Endothelial cell of umbilical vein (primary cell): ENCODE measurements at regions of chr17 and their contacts with region 1.

Region 1: DNA sequence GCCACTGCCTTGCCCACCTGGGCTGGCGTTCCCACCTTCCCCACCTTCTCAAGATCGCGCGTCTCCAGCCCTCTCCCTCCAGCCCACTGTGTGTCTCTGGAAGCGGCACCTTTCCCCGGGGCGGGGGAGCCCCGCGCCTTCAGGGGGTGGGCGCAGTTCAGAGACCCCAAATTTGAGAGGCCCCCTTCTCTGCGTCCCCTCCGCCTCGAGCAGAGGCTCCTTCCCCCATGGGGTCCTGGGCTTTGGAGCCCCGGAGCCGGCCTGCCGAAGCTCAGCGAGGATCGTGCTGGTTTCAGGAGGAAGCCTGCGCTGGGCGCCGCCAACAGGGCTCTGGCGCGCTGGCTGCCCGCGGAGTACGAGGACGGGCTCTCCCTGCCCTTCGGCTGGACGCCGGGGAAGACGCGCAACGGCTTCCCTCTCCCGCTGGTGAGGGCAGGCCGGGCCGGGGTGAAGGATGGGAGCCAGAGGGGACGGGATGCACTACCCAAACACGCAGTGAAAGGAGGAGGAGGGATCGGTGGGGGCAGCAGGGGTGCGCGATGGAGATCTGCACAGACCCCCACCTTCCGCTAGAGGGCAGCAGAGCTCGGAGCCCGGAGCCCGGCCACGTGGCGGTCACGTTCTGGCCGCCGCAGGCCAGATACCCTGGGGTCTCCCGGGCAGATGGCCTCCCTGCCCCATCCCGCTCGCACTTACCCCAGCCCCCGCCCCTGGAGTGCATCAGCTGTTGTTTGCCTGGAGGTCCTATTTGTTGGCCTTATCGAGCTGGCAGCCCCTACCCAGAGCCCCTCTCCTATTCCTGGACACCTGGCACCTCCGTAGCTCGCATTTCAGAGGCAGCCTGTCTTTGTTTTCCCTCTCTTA is 11.1 kb downstream of the LPO start:
- DNase-seq: peak; percentile 55
- H3K4me3 ChIP-seq: peak overlapping the region in 2 of 3 experiments; percentile 31 to 46
- H3K27ac ChIP-seq: no peak overlapping the region
- H3K4me1 ChIP-seq: no peaks in the 10 kb centered on the region
- H3K27me3 ChIP-seq: peaks cover 24% of the 10 kb centered on the region in 2 experiments
- CTCF ChIP-seq: peak; percentile 92 to 99
- POLR2A ChIP-seq: no peak

Region 2: DNA sequence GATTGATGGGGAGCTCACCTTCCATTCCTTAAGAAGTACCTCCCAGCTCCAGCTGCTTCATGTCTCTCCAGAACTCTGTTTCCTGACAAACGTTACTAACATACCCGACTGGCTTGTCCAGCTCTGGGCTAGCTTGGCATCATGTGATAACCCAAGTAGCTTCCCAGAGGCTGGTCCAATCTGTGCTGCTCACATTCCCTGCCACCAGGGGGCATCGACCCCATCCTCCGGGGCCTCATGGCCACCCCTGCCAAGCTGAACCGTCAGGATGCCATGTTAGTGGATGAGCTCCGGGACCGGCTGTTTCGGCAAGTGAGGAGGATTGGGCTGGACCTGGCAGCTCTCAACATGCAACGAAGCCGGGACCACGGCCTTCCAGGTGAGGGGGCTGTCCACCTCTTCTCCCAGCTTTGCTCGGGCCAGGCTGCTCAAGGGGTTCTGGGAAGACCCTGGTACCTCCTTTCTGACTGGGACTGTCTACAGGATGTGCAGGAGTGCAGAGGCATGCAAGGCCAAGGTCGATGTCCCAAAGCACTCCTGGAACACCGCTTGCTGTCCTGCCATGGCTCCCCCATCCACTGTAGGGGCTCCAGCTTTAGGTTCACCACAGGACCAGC is 49.4 kb before region 1 on chr17:
- CTCF ChIA-PET with region 1: interaction called, 18 read pairs
- POLR2A ChIA-PET with region 1: no interaction called
- dilution Hi-C with region 1: no loop called
- intact Hi-C with region 1: loop called (anchors 5 kb)
- DNase-seq: peak; percentile 43
- H3K4me3 ChIP-seq: no peak overlapping the region
- H3K27ac ChIP-seq: no peak overlapping the region
- H3K4me1 ChIP-seq: no peaks in the 10 kb centered on the region
- H3K27me3 ChIP-seq: peaks cover 0 to 3% of the 10 kb centered on the region in 2 experiments
- CTCF ChIP-seq: peak; percentile 65 to 75
- POLR2A ChIP-seq: no peak

Region 3: DNA sequence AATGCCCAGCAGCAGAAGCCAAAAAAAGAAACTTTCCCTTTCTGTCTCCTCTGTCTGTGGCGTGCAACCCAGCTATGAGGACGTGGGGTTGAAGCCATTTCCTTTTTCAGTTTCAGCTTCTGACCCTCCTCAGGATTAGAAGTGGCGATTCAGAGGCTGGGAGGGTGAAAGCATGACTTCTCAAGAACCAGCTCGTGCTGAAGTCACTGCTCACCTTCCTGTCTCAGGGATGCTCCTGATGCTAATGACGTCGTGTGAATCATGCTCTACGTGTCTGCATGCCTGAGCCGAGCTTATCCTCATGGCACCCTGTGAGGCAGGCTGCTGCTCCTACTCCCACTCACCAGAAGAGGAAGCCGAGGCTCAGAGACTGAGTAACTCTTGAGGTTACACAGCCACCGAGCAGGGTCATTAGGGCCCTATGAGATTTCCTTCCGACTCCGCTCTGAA is 16.8 kb before region 1 on chr17:
- CTCF ChIA-PET with region 1: interaction called, 30 read pairs
- POLR2A ChIA-PET with region 1: no interaction called
- dilution Hi-C with region 1: no loop called
- intact Hi-C with region 1: no loop called
- DNase-seq: no peak
- H3K4me3 ChIP-seq: no peak overlapping the region
- H3K27ac ChIP-seq: no peak overlapping the region
- H3K4me1 ChIP-seq: no peaks in the 10 kb centered on the region
- H3K27me3 ChIP-seq: peaks cover 8 to 22% of the 10 kb centered on the region in 2 experiments
- CTCF ChIP-seq: no peak
- POLR2A ChIP-seq: no peak

Region 4: DNA sequence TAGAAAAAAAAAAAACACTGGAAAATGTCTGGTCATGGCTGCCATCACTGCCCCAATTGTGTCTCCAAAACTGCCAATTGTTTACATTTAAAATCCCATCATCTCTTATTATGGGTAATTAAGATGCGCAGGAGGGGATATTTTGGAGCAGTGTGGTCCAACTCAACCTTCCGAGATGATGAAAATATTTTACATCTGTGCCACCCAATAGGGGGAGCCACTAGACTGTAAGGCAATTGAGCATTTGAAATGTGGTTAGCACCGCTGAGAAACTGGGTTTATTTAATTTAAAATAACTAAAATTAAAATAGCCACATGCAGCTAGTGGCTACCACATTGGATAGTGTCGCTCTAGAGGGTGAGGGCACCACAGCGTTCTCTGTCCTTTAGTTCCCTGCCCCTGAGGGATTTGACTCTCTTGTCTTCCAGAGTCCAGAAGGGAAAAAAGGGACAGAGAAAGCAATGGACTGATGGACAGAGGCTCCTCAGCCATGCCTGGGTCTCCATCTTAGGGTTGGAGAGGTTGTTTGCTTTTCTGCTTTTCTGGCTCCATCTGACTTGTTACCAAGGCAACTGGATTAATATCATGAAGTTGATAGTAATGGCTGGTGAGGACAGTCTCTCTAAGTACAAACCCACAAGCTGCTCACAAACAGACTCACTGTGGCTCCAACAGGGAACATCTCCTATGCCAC is 27.8 kb after region 1 on chr17:
- CTCF ChIA-PET with region 1: interaction called, 5 read pairs
- POLR2A ChIA-PET with region 1: no interaction called
- dilution Hi-C with region 1: no loop called
- intact Hi-C with region 1: loop called (anchors 1 kb)
- DNase-seq: no peak
- H3K4me3 ChIP-seq: no peak overlapping the region
- H3K27ac ChIP-seq: no peak overlapping the region
- H3K4me1 ChIP-seq: no peaks in the 10 kb centered on the region
- H3K27me3 ChIP-seq: peaks cover 2 to 8% of the 10 kb centered on the region in 2 experiments
- CTCF ChIP-seq: peak in 1 of 2 donors; percentile 16
- POLR2A ChIP-seq: no peak

Region 5: DNA sequence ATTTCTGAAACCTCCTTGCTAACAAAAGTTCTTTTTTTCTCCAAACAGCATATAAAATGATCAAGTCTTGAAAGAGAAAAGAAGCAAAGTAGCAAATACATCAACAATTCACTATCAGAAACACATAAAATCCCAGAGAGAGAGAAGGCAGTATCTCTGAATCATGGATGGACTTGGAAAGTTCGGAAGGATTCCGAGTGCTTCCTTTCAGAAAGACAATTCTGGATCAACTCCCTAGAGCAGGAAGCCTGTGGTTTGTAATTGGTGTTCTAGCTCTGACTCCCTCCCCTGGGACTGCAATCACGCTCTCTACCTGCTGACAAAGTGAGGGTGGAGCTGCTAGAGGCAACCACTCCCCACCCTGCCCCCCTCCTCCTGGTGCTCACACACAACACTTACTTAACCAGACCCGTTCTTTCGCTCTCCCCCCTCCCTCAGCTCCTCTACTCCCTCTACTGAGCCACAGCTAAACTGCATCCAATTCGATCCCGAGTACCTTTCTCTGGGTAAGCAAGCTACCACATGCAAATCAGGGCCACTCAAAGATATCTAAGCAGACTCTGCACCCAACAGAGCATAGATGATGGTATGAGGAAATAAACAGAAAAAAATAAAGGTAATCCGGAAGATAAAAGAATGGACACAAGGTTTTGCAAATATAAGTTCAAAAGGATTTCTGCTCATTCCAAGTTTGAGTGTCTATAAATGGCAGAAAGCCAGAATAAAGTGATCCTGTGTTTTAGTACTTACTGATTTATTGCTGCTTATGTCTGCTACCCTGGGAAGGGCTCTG is 168.0 kb after region 1 on chr17 and contains the start of gene RNF43:
- CTCF ChIA-PET with region 1: interaction called, 11 read pairs
- POLR2A ChIA-PET with region 1: no interaction called
- dilution Hi-C with region 1: no loop called
- intact Hi-C with region 1: no loop called
- DNase-seq: peak; percentile 88
- H3K4me3 ChIP-seq: no peak within 1 kb of the TSS
- H3K27ac ChIP-seq: no peak within 1 kb of the TSS
- H3K4me1 ChIP-seq: no peaks in the 10 kb centered on the region
- H3K27me3 ChIP-seq: peaks cover 10 to 50% of the 10 kb centered on the region in 2 experiments
- CTCF ChIP-seq: peak; percentile 60 to 81
- POLR2A ChIP-seq: no peak
- total RNA-seq, gene RNF43: not detected in 2 replicates